ENCODE measurements at regions of chr3 and their contacts with region 1.

Region 1: DNA sequence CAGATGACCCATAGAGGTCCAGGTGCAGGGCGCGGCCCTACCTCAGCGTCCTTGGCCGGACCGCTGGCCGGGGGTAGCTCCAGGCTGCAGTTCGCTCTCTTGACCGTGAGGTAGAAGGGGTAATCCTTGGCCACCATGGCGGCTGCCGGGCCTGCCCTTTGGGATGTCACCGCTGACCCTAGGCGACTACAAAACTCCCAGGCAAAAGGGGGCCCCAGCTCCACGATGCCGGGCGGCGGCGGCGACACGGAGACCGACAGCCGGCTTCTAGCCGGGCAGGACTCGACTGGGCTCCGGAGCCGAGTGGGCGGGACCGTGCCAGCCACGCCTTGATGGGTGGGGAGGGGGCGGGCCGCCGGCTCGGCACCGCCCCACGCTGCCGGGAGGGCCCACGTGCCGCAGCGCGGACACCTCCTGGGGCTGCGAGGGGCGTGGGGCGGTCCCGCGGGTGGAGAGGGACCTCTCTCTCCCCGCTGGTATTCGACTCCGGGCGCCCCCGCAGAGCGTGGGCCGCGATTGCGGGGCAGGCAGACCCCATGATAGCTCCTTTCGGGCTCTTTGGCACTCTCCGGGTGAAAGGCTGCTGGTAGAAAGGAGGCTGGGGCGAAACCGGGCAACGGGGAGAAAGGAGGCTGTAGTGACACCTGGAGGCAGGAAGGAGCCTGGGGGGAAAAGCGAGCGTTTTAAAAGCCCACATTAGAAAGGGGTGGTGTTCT is at the start of gene ARHGEF3:
- DNase-seq: peak; percentile 86 to 90 (median 86)
- H3K4me3 ChIP-seq: peak within 1 kb of the TSS; percentile 86 to 87
- H3K4me3 Mint-ChIP-seq: peak within 1 kb of the TSS; percentile 92 to 99 (median 96)
- H3K27ac ChIP-seq: peak within 1 kb of the TSS; percentile 79
- H3K27ac Mint-ChIP-seq: peak within 1 kb of the TSS; percentile 85 to 98 (median 92)
- H3K4me1 ChIP-seq: peaks cover 38% of the 10 kb centered on the region
- H3K4me1 Mint-ChIP-seq: peaks cover 33 to 64% (median 43%) of the 10 kb centered on the region in 4 donors
- H3K27me3 ChIP-seq: no peaks in the 10 kb centered on the region
- H3K27me3 Mint-ChIP-seq: no peaks in the 10 kb centered on the region
- total RNA-seq, gene ARHGEF3: 120 TPM

Region 2: DNA sequence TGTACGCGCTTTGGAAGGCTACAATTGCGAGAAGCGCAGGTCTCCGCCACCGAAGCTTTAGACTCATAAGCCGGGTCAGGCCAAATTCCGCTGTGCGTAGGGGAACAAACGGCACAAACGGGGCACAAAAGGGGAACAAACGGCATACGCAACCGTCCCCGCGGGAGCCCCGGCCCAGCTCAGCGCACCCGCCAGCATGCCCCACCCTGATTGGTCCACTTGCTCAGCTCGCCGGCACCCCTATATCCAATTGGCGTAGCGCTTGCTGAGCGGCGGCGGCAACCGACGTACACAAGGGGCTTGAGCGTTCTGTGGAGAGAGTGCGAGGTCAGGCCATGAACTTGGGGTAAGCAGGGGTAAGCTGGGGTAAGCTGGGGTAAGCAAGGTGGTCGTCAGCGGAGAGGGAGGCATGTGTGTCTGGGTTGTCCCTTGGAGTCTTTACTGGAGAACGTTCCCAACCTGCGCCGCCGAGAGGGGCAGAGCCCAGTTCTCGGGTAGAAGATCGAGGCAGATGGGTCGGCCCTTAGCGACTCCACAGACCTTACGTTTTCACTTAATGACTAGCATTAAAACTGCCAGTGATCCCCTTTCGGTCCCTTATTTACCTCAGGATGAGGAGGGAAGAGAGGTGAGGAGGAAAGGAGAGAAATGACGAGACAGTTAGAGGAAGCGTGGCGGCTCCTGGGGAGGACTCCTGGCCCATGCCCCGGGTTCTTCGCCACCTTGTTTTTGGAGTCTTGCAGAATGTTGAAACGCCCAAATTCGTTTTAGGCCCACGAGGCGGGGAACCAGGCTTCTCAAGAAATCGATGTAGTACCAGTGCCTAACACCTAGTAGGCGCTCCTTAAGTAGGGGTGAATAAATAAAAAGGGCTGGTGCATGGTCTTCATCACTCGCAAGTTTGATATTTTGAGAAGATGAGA is 244.7 kb before region 1 on chr3 and contains the start of gene CCDC66:
- CTCF ChIA-PET with region 1: interaction called, 5 read pairs
- POLR2A ChIA-PET with region 1: interaction called, 14 read pairs
- intact Hi-C with region 1: loop called (anchors 2 kb)
- DNase-seq: peak; percentile 92 to 95 (median 93)
- H3K4me3 ChIP-seq: peak within 1 kb of the TSS; percentile 90 to 91
- H3K4me3 Mint-ChIP-seq: peak within 1 kb of the TSS; percentile 95 to 100 (median 99)
- H3K27ac ChIP-seq: peak within 1 kb of the TSS; percentile 91
- H3K27ac Mint-ChIP-seq: peak within 1 kb of the TSS; percentile 98 to 100 (median 99)
- H3K4me1 ChIP-seq: peaks cover 24% of the 10 kb centered on the region
- H3K4me1 Mint-ChIP-seq: peaks cover 15 to 42% (median 29%) of the 10 kb centered on the region in 4 donors
- H3K27me3 ChIP-seq: no peaks in the 10 kb centered on the region
- H3K27me3 Mint-ChIP-seq: no peaks in the 10 kb centered on the region
- total RNA-seq, gene CCDC66: 93.4 to 104 TPM

Region 3: GRCh38 chr3:56725175-56725574 is 76.6 kb before region 1 on chr3:
- CTCF ChIA-PET with region 1: interaction called, 63 read pairs
- POLR2A ChIA-PET with region 1: interaction called, 31 read pairs
- intact Hi-C with region 1: no loop called
- DNase-seq: peak; percentile 48 to 71 (median 65)
- H3K4me3 ChIP-seq: no peak overlapping the region
- H3K4me3 Mint-ChIP-seq: peak overlapping the region; percentile 37 to 92 (median 70)
- H3K27ac ChIP-seq: peak overlapping the region; percentile 4
- H3K27ac Mint-ChIP-seq: peak overlapping the region; percentile 25 to 96 (median 79)
- H3K4me1 ChIP-seq: peaks cover 27% of the 10 kb centered on the region
- H3K4me1 Mint-ChIP-seq: peaks cover 30 to 62% (median 46%) of the 10 kb centered on the region in 4 donors
- H3K27me3 ChIP-seq: no peaks in the 10 kb centered on the region
- H3K27me3 Mint-ChIP-seq: no peaks in the 10 kb centered on the region

Region 4: DNA sequence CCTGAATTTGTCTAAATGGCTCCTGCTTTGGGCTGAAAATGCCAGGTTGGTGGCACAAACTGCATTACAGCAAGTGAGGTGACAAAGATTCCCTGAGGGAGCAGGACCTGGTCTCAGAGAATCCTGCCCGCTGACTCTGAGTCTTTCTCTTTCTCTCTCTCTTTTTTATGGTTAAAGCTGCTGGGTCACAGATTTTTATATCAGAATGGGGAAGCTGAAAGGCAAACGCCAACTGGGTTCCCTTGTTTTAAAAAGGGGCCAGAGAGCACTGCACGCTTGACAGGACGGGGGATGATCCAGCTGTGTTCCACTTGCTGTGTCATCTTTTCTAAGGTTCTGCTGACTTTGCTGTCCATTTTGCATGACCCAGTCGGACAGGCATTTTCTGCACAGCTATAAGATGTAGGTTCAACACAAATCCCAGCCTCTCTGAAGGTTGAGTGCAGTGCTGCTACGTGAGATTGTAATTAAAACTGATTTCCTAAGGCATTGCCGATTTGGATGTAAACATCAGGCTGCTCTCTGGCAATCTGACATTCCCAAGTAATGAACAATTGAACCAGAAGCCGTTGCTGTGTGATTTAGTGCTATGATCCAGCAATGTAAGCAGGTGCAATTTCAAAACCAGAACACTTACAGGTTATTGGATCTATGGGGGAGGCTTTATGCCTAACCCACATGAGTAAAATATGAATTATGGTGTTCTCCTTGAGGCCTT is 25.8 kb before region 1 on chr3:
- CTCF ChIA-PET with region 1: interaction called, 127 read pairs
- POLR2A ChIA-PET with region 1: interaction called, 218 read pairs
- intact Hi-C with region 1: no loop called
- DNase-seq: no peak
- H3K4me3 ChIP-seq: no peak overlapping the region
- H3K4me3 Mint-ChIP-seq: peak overlapping the region in 5 of 8 donors; percentile 16 to 46 (median 41)
- H3K27ac ChIP-seq: no peak overlapping the region
- H3K27ac Mint-ChIP-seq: peak overlapping the region in 6 of 7 donors; percentile 2 to 85 (median 45)
- H3K4me1 ChIP-seq: peaks cover 75% of the 10 kb centered on the region
- H3K4me1 Mint-ChIP-seq: peaks cover 60 to 97% (median 79%) of the 10 kb centered on the region in 4 donors
- H3K27me3 ChIP-seq: no peaks in the 10 kb centered on the region
- H3K27me3 Mint-ChIP-seq: no peaks in the 10 kb centered on the region

Region 5: GRCh38 chr3:56825567-56826438 is 24.0 kb after region 1 on chr3:
- CTCF ChIA-PET with region 1: interaction called, 26 read pairs
- POLR2A ChIA-PET with region 1: interaction called, 4 read pairs
- intact Hi-C with region 1: no loop called
- DNase-seq: no peak
- H3K4me3 ChIP-seq: no peak overlapping the region
- H3K4me3 Mint-ChIP-seq: peak overlapping the region in 2 of 8 donors; percentile 9 to 22
- H3K27ac ChIP-seq: no peak overlapping the region
- H3K27ac Mint-ChIP-seq: peak overlapping the region; percentile 0 to 88 (median 72)
- H3K4me1 ChIP-seq: peaks cover 45% of the 10 kb centered on the region
- H3K4me1 Mint-ChIP-seq: peaks cover 45 to 81% (median 47%) of the 10 kb centered on the region in 4 donors
- H3K27me3 ChIP-seq: no peaks in the 10 kb centered on the region
- H3K27me3 Mint-ChIP-seq: no peaks in the 10 kb centered on the region

Region 6: GRCh38 chr3:56894881-56895431 is 93.1 kb after region 1 on chr3:
- CTCF ChIA-PET with region 1: interaction called, 3 read pairs
- POLR2A ChIA-PET with region 1: interaction called, 10 read pairs
- intact Hi-C with region 1: no loop called
- DNase-seq: peak; percentile 13 to 55 (median 24)
- H3K4me3 ChIP-seq: no peak overlapping the region
- H3K4me3 Mint-ChIP-seq: peak overlapping the region in 6 of 8 donors; percentile 39 to 63 (median 48)
- H3K27ac ChIP-seq: no peak overlapping the region
- H3K27ac Mint-ChIP-seq: peak overlapping the region; percentile 29 to 89 (median 66)
- H3K4me1 ChIP-seq: peaks cover 58% of the 10 kb centered on the region
- H3K4me1 Mint-ChIP-seq: peaks cover 55 to 82% (median 72%) of the 10 kb centered on the region in 4 donors
- H3K27me3 ChIP-seq: no peaks in the 10 kb centered on the region
- H3K27me3 Mint-ChIP-seq: no peaks in the 10 kb centered on the region

Region 7: GRCh38 chr3:56988458-56989168 is 186.8 kb after region 1 on chr3:
- CTCF ChIA-PET with region 1: interaction called, 197 read pairs
- POLR2A ChIA-PET with region 1: interaction called, 70 read pairs
- intact Hi-C with region 1: loop called (anchors 1 kb)
- DNase-seq: peak; percentile 53 to 67 (median 61)
- H3K4me3 ChIP-seq: no peak overlapping the region
- H3K4me3 Mint-ChIP-seq: peak overlapping the region in 1 of 8 donors; percentile 18
- H3K27ac ChIP-seq: no peak overlapping the region
- H3K27ac Mint-ChIP-seq: peak overlapping the region in 3 of 7 donors; percentile 14 to 32 (median 15)
- H3K4me1 ChIP-seq: peaks cover 9% of the 10 kb centered on the region
- H3K4me1 Mint-ChIP-seq: peaks cover 9 to 28% (median 17%) of the 10 kb centered on the region in 4 donors
- H3K27me3 ChIP-seq: no peaks in the 10 kb centered on the region
- H3K27me3 Mint-ChIP-seq: peaks cover 7 to 9% of the 10 kb centered on the region in 2 donors

Region 8: GRCh38 chr3:57252404-57252803 is 450.6 kb after region 1 on chr3:
- CTCF ChIA-PET with region 1: no interaction called
- POLR2A ChIA-PET with region 1: no interaction called
- intact Hi-C with region 1: no loop called
- DNase-seq: no peak
- H3K4me3 ChIP-seq: no peak overlapping the region
- H3K4me3 Mint-ChIP-seq: no peak overlapping the region
- H3K27ac ChIP-seq: no peak overlapping the region
- H3K27ac Mint-ChIP-seq: peak overlapping the region in 1 of 7 donors; percentile 18
- H3K4me1 ChIP-seq: no peaks in the 10 kb centered on the region
- H3K4me1 Mint-ChIP-seq: no peaks in the 10 kb centered on the region
- H3K27me3 ChIP-seq: no peaks in the 10 kb centered on the region
- H3K27me3 Mint-ChIP-seq: no peaks in the 10 kb centered on the region